Caco-2 (cell line): ENCODE measurements at regions of chr6 and their contacts with region 1.

Region 1: GRCh38 chr6:158439255-158439654 is 120.6 kb upstream of the TMEM181 start:
- DNase-seq: no peak
- H3K4me3 ChIP-seq: no peak overlapping the region
- H3K4me3 Mint-ChIP-seq: no peak overlapping the region
- H3K27ac Mint-ChIP-seq: no peak overlapping the region
- H3K4me1 ChIP-seq: no peaks in the 10 kb centered on the region
- H3K4me1 Mint-ChIP-seq: no peaks in the 10 kb centered on the region
- H3K27me3 ChIP-seq: no peaks in the 10 kb centered on the region
- H3K27me3 Mint-ChIP-seq: no peaks in the 10 kb centered on the region
- CTCF ChIP-seq: no peak

Region 2: GRCh38 chr6:158457616-158458278 is 18.5 kb after region 1 on chr6:
- CTCF ChIA-PET with region 1: no interaction called
- POLR2A ChIA-PET with region 1: interaction called, 11 read pairs
- intact Hi-C with region 1: no loop called
- DNase-seq: no peak
- H3K4me3 ChIP-seq: no peak overlapping the region
- H3K4me3 Mint-ChIP-seq: peak overlapping the region; percentile 15
- H3K27ac Mint-ChIP-seq: peak overlapping the region; percentile 88
- H3K4me1 ChIP-seq: peaks cover 37% of the 10 kb centered on the region
- H3K4me1 Mint-ChIP-seq: peaks cover 32% of the 10 kb centered on the region
- H3K27me3 ChIP-seq: no peaks in the 10 kb centered on the region
- H3K27me3 Mint-ChIP-seq: no peaks in the 10 kb centered on the region
- CTCF ChIP-seq: no peak